PC-9 (cell line): ENCODE measurements at regions of chr6 and their contacts with region 1.

Region 1: GRCh38 chr6:155126727-155127439 is 131.8 kb downstream of the TIAM2 start:
- DNase-seq: peak; percentile 78 to 91
- H3K4me3 ChIP-seq: peak overlapping the region; percentile 6; the same call in 1 of the 2 replicates
- H3K27ac ChIP-seq: peak overlapping the region; percentile 87
- H3K4me1 ChIP-seq: peaks cover 28% of the 10 kb centered on the region
- H3K27me3 ChIP-seq: no peaks in the 10 kb centered on the region
- CTCF ChIP-seq: no peak

Region 2: GRCh38 chr6:154882107-154882506 is 244.8 kb before region 1 on chr6:
- CTCF ChIA-PET with region 1: no interaction called
- POLR2A ChIA-PET with region 1: no interaction called
- intact Hi-C with region 1: no loop called
- DNase-seq: no peak
- H3K4me3 ChIP-seq: no peak overlapping the region
- H3K27ac ChIP-seq: no peak overlapping the region
- H3K4me1 ChIP-seq: no peaks in the 10 kb centered on the region
- H3K27me3 ChIP-seq: no peaks in the 10 kb centered on the region
- CTCF ChIP-seq: no peak

Region 3: GRCh38 chr6:155143029-155143577 is 16.2 kb after region 1 on chr6:
- CTCF ChIA-PET with region 1: no interaction called
- POLR2A ChIA-PET with region 1: interaction called, 7 read pairs
- intact Hi-C with region 1: loop called (anchors 2 kb)
- DNase-seq: no peak
- H3K4me3 ChIP-seq: no peak overlapping the region
- H3K27ac ChIP-seq: no peak overlapping the region
- H3K4me1 ChIP-seq: peaks cover 5% of the 10 kb centered on the region
- H3K27me3 ChIP-seq: no peaks in the 10 kb centered on the region
- CTCF ChIP-seq: no peak

Region 4: GRCh38 chr6:155154158-155154830 is 27.4 kb after region 1 on chr6:
- CTCF ChIA-PET with region 1: no interaction called
- POLR2A ChIA-PET with region 1: interaction called, 3 read pairs
- intact Hi-C with region 1: loop called (anchors 2 kb)
- DNase-seq: peak; percentile 32 to 86
- H3K4me3 ChIP-seq: peak overlapping the region; percentile 0; the same call in 1 of the 2 replicates
- H3K27ac ChIP-seq: peak overlapping the region; percentile 58
- H3K4me1 ChIP-seq: peaks cover 61% of the 10 kb centered on the region
- H3K27me3 ChIP-seq: no peaks in the 10 kb centered on the region
- CTCF ChIP-seq: no peak